Thyroid gland (tissue), 4 donors: ENCODE measurements at regions of chr4 and their contacts with region 1.

Region 1: GRCh38 chr4:87679449-87680169 is 29.5 kb downstream of the DMP1 start:
- DNase-seq: peak; percentile 9 to 26
- H3K4me3 ChIP-seq: no peak overlapping the region
- H3K27ac ChIP-seq: no peak overlapping the region
- H3K4me1 ChIP-seq: no peaks in the 10 kb centered on the region
- H3K27me3 ChIP-seq: no peaks in the 10 kb centered on the region
- CTCF ChIP-seq: peak; percentile 35 to 82 (median 54)
- POLR2A ChIP-seq: no peak

Region 2: GRCh38 chr4:87843936-87844335 is 164.3 kb after region 1 on chr4:
- intact Hi-C with region 1: loop called (anchors 5 kb)
- DNase-seq: no peak
- H3K4me3 ChIP-seq: no peak overlapping the region
- H3K27ac ChIP-seq: no peak overlapping the region
- H3K4me1 ChIP-seq: peaks cover 0 to 4% of the 10 kb centered on the region in 2 donors
- H3K27me3 ChIP-seq: no peaks in the 10 kb centered on the region
- CTCF ChIP-seq: no peak
- POLR2A ChIP-seq: no peak